ENCODE measurements at regions of chr10 and their contacts with region 1.

Region 1: GRCh38 chr10:102509387-102509786 is 5.6 kb downstream of the SUFU start:
- DNase-seq: peak; percentile 47
- H3K4me3 Mint-ChIP-seq: no peak overlapping the region
- H3K27ac Mint-ChIP-seq: no peak overlapping the region
- H3K4me1 Mint-ChIP-seq: peaks cover 7% of the 10 kb centered on the region
- H3K27me3 Mint-ChIP-seq: no peaks in the 10 kb centered on the region
- CTCF ChIP-seq: no peak

Region 2: DNA sequence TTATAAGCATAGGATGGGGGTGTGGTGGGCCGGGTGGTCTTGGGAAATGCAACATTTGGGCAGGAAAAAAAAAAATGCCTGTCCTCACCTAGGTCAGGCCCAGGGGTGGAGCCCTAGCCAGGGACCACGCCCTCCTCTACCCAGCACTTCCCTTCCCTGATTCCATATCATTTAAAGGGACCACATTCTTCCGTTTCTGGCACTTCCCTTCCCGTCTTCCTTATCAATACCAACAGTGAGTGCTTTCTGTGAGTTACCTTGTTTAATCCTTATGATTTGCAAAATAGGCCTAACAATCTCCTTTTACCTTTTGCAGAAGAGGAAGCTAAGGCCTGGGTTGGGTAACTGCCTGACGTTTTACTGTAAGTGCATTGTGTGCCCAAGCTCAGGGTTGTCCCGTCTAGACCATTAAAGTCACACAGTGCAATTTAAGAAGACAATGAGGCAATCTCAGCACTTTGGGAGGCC is 41.4 kb before region 1 on chr10:
- CTCF ChIA-PET with region 1: no interaction called
- POLR2A ChIA-PET with region 1: no interaction called
- intact Hi-C with region 1: no loop called
- DNase-seq: no peak
- H3K4me3 Mint-ChIP-seq: peak overlapping the region; percentile 27
- H3K27ac Mint-ChIP-seq: no peak overlapping the region
- H3K4me1 Mint-ChIP-seq: no peaks in the 10 kb centered on the region
- H3K27me3 Mint-ChIP-seq: no peaks in the 10 kb centered on the region
- CTCF ChIP-seq: no peak

Region 3: DNA sequence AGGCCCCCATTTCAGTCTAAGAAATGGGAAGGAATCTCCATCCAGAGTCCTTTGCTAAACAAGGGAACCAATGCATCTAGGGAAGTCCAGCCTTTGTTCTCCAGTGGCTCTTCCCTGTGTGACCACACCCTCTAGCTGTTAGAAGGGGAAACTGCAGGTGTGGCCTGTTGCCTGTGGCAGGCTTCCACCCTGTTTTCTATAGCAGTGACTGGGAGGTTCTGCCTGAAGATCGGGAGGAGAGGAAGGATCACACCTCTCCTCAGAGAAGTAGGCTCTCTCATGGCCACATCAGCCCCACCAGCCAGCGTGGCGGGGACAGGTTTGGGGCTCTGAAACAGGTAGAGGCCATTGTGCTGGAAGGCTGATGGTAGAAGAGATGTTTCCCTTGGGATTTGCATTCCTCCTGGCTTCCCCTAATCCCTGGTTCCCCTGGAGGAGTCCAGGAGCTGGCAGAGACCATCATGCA is 87.2 kb after region 1 on chr10:
- CTCF ChIA-PET with region 1: interaction called, 11 read pairs
- POLR2A ChIA-PET with region 1: interaction called, 4 read pairs
- intact Hi-C with region 1: no loop called
- DNase-seq: peak; percentile 66
- H3K4me3 Mint-ChIP-seq: no peak overlapping the region
- H3K27ac Mint-ChIP-seq: no peak overlapping the region
- H3K4me1 Mint-ChIP-seq: no peaks in the 10 kb centered on the region
- H3K27me3 Mint-ChIP-seq: no peaks in the 10 kb centered on the region
- CTCF ChIP-seq: peak; percentile 86